ENCODE measurements at regions of chr1 and their contacts with region 1.

Region 1: DNA sequence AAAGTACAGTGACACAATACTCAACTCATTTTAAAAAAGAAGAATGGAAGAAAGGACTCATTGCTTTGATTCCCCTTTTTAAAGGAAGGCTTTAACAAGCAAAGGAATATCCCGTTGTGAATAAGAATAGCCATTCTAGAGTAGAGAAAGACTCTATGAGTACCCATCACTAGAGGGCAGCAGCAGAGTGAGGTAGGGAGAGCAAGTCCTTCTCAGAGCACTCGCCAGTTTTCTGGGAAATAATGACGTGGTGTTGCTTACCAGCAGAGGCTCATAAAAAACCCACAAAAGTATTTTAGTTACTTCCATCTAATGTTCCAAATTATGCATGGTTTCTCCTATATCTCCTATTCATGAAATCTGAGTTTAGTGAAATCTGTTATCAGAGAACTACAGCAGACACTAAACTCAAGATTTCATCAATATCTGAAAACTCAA is 74.6 kb downstream of the USP24 start:
- DNase-seq: peak; percentile 47
- CTCF ChIP-seq: peak; percentile 71

Region 2: GRCh38 chr1:55124470-55124869 is 16.1 kb before region 1 on chr1:
- CTCF ChIA-PET with region 1: interaction called, 10 read pairs
- POLR2A ChIA-PET with region 1: no interaction called
- DNase-seq: no peak
- CTCF ChIP-seq: no peak

Region 3: GRCh38 chr1:55150880-55151588 is 10.5 kb after region 1 on chr1:
- CTCF ChIA-PET with region 1: interaction called, 26 read pairs
- POLR2A ChIA-PET with region 1: no interaction called
- DNase-seq: peak; percentile 17
- CTCF ChIP-seq: no peak

Region 4: GRCh38 chr1:55257958-55258357 is 117.4 kb after region 1 on chr1:
- CTCF ChIA-PET with region 1: interaction called, 15 read pairs
- POLR2A ChIA-PET with region 1: no interaction called
- DNase-seq: peak; percentile 47
- CTCF ChIP-seq: no peak